Endothelial cell of umbilical vein (primary cell): ENCODE measurements at regions of chr12 and their contacts with region 1.

Region 1: GRCh38 chr12:126069549-126070165 is 1004.4 kb downstream of the AACS start:
- DNase-seq: peak; percentile 2
- H3K4me3 ChIP-seq: no peak overlapping the region
- H3K27ac ChIP-seq: no peak overlapping the region
- H3K4me1 ChIP-seq: no peaks in the 10 kb centered on the region
- H3K27me3 ChIP-seq: no peaks in the 10 kb centered on the region
- CTCF ChIP-seq: peak; percentile 30 to 46
- POLR2A ChIP-seq: no peak

Region 2: DNA sequence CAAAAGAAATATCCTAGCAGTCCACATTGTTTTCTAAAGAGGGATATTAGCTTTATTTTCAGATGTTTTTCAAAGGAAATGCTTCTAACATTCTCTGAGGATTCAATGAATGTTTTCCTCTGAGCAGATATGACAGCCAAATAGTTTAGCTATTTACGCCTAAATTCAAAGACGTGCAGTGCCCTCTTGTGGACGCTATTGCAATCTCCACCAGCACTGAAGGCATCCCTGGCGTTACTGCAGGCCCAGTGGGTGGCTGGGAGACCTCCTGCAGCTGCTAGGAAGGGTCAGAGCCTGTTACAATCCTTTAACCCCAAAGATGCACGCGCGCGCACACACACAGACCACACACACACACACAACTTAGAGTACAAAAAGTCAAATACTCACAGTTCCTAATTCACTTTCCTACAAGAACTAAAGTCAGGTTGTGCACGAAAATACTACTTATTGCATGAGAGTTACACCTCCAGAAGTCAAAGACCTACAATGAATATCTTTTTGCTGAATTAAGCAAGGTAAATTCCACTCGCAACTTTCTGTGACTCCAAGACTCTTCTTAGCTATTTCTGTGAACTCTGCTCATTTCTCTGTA is 1608.0 kb after region 1 on chr12:
- CTCF ChIA-PET with region 1: interaction called, 4 read pairs
- POLR2A ChIA-PET with region 1: no interaction called
- dilution Hi-C with region 1: no loop called
- intact Hi-C with region 1: loop called (anchors 2 kb)
- DNase-seq: peak; percentile 2
- H3K4me3 ChIP-seq: no peak overlapping the region
- H3K27ac ChIP-seq: no peak overlapping the region
- H3K4me1 ChIP-seq: no peaks in the 10 kb centered on the region
- H3K27me3 ChIP-seq: no peaks in the 10 kb centered on the region
- CTCF ChIP-seq: peak; percentile 18 to 22
- POLR2A ChIP-seq: no peak

Region 3: GRCh38 chr12:128069359-128069997 is 1999.8 kb after region 1 on chr12:
- CTCF ChIA-PET with region 1: interaction called, 10 read pairs
- POLR2A ChIA-PET with region 1: no interaction called
- dilution Hi-C with region 1: no loop called
- intact Hi-C with region 1: no loop called
- DNase-seq: peak; percentile 11
- H3K4me3 ChIP-seq: no peak overlapping the region
- H3K27ac ChIP-seq: no peak overlapping the region
- H3K4me1 ChIP-seq: no peaks in the 10 kb centered on the region
- H3K27me3 ChIP-seq: no peaks in the 10 kb centered on the region
- CTCF ChIP-seq: peak; percentile 39 to 53
- POLR2A ChIP-seq: no peak